Esophagus squamous epithelium (tissue), 5 donors: ENCODE measurements at regions of chr22 and their contacts with region 1.

Region 1: GRCh38 chr22:44819971-44820631 is 67.7 kb downstream of the ARHGAP8 start:
- DNase-seq: no peak
- H3K4me3 ChIP-seq: no peak overlapping the region
- H3K27ac ChIP-seq: no peak overlapping the region
- H3K4me1 ChIP-seq: peaks cover 0 to 3% (median 0%) of the 10 kb centered on the region in 3 donors
- H3K27me3 ChIP-seq: peaks cover 0 to 19% (median 0%) of the 10 kb centered on the region in 4 donors
- CTCF ChIP-seq: no peak
- POLR2A ChIP-seq: no peak

Region 2: DNA sequence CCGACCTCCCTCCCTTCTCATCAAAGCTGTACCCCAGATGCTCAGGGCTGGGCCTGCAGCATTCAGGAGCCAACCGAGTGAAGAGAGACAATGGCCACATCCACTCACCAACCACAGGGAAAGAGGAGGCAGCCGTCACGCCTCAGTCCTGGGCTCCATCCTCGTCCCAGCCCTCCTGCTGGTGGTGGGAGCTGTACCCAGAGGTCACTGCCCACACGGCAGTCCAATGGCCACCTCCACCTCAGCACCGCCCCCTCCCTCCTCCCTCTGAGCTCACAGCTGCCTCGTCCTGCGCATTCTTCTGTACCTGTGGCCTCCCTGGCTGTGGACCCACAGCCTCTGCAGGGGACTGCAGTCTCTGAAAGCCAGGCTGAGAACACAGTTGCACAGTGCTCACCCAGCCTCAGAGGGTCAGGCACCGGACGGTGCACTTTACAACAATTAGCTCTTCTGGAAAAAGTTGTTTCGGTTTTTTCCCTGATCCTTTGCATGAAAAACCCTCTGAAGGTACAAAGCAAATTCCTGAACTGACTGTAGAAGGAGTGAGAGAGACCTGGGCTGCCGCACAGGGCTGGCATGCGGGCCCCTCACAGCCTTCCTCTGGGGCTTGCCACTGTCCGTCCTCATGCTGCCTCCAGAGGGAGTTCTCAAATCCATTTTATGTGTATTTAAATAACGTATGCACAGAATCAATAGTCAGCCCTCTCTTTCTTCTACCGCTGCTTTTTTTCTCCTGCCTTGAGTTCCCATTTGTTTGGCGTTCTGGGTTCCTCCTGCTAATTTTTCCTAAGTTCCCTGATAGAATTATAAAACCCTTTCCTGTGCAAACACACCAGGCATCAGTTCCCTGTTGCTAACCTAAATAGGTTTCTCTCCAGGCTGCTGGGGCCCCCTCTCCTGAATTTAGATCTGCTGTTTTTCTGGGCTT is 137.0 kb after region 1 on chr22:
- intact Hi-C with region 1: no loop called
- DNase-seq: no peak
- H3K4me3 ChIP-seq: no peak overlapping the region
- H3K27ac ChIP-seq: no peak overlapping the region
- H3K4me1 ChIP-seq: no peaks in the 10 kb centered on the region
- H3K27me3 ChIP-seq: peaks cover 0 to 49% (median 0%) of the 10 kb centered on the region in 4 donors
- CTCF ChIP-seq: no peak
- POLR2A ChIP-seq: no peak

Region 3: GRCh38 chr22:44975427-44976262 is 155.5 kb after region 1 on chr22:
- intact Hi-C with region 1: loop called (anchors 10 kb)
- DNase-seq: peak; percentile 2
- H3K4me3 ChIP-seq: no peak overlapping the region
- H3K27ac ChIP-seq: no peak overlapping the region
- H3K4me1 ChIP-seq: no peaks in the 10 kb centered on the region
- H3K27me3 ChIP-seq: peaks cover 0 to 18% (median 0%) of the 10 kb centered on the region in 4 donors
- CTCF ChIP-seq: peak; percentile 37 to 87 (median 67)
- POLR2A ChIP-seq: no peak